ENCODE measurements at regions of chr6 and their contacts with region 1.

Region 1: DNA sequence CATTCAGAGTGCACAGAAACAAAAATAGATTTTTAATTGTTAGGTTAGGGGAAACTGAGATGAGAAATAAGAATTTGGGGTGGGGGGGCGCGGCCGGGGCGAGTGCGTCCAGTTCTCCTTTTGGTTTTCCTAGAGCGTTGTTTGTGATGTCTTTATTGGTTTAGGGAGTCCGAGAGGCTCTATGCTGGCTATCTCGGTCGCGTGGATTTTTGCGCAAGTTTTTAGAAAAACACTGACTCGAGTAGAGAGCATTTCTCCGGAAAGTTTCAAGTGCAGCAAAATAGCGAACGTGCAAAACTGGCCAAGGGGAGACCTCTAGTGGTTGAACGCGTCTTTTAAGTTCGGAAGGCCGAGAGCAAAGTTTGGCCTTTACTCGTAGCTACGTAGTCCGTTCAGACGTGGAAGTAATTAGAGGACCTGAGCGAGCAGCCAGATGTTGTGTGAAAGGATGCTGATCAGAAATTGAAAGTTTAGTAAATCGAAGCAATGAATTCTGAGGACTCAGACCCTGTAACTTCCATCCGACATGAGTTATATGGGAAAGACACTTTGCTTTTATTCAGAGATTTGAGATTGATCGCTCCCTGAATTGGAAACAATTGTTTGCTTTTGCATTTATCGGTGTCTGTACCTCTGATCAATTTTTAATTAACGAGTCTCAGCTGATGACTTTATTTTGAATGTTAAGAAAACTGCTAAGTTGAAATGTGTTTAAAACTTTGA is 2.7 kb downstream of the L3MBTL3 start:
- DNase-seq: peak; percentile 43 to 83 (median 78)
- ATAC-seq: peak; percentile 81
- H3K4me3 ChIP-seq: peak overlapping the region; percentile 62
- H3K4me3 Mint-ChIP-seq: peak overlapping the region; percentile 78 to 100 (median 98)
- H3K27ac ChIP-seq: peak overlapping the region; percentile 71
- H3K27ac Mint-ChIP-seq: peak overlapping the region; percentile 91 to 98 (median 96)
- H3K4me1 ChIP-seq: peaks cover 5 to 14% of the 10 kb centered on the region in 2 donors
- H3K4me1 Mint-ChIP-seq: peaks cover 21 to 56% (median 48%) of the 10 kb centered on the region in 7 donors
- H3K27me3 ChIP-seq: no peaks in the 10 kb centered on the region
- H3K27me3 Mint-ChIP-seq: peaks cover 0 to 19% (median 0%) of the 10 kb centered on the region in 5 donors

Region 2: DNA sequence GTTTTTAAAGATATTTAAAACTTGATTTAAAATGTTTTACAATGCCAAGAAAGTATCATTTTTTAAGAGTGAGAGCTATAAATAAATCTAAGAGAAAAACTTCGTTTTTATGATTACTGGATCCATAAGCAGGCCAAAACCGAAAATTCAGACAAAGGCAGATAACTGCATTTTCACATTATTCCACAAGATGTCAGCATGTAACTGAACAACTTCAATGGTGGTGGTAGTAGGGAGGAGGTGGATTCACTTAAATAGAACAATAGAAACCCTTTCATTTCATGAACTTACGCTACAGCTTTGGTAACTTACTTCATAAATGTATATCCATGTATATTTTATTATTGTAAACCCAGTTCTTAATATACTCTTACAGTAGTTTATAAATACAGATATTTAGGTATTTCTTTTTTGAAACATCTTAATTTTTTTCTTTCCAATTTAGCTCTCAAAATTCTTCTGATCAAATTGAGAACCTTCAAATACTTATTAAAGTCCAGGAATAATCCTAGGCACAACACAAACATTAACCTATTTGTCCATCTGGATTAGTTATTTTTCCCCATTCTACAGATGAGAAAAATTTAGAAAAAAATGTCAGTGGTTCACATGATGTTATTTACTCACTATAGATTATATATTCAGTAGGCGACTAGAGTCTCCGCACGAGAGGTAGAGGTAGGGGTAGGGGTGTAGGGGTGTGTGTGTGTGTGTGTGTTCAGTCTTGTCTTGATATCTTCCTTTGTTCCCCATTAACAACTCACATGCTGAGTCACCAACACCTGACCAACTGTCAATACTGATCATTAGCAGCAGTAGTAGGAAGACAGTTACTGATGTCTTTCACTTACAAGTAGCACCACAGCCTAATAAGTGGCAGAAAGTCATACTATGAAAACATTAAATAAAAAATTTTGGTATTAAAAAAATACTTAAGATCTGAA is 422.6 kb before region 1 on chr6:
- CTCF ChIA-PET with region 1: interaction called, 28 read pairs
- POLR2A ChIA-PET with region 1: interaction called, 5 read pairs
- intact Hi-C with region 1: loop called (anchors 1 kb)
- DNase-seq: peak in 7 of 9 donors; percentile 37 to 79 (median 70)
- ATAC-seq: peak; percentile 95
- H3K4me3 ChIP-seq: no peak overlapping the region
- H3K4me3 Mint-ChIP-seq: no peak overlapping the region
- H3K27ac ChIP-seq: no peak overlapping the region
- H3K27ac Mint-ChIP-seq: no peak overlapping the region
- H3K4me1 ChIP-seq: no peaks in the 10 kb centered on the region
- H3K4me1 Mint-ChIP-seq: peaks cover 0 to 2% (median 0%) of the 10 kb centered on the region in 7 donors
- H3K27me3 ChIP-seq: no peaks in the 10 kb centered on the region
- H3K27me3 Mint-ChIP-seq: peaks cover 0 to 3% (median 0%) of the 10 kb centered on the region in 5 donors

Region 3: DNA sequence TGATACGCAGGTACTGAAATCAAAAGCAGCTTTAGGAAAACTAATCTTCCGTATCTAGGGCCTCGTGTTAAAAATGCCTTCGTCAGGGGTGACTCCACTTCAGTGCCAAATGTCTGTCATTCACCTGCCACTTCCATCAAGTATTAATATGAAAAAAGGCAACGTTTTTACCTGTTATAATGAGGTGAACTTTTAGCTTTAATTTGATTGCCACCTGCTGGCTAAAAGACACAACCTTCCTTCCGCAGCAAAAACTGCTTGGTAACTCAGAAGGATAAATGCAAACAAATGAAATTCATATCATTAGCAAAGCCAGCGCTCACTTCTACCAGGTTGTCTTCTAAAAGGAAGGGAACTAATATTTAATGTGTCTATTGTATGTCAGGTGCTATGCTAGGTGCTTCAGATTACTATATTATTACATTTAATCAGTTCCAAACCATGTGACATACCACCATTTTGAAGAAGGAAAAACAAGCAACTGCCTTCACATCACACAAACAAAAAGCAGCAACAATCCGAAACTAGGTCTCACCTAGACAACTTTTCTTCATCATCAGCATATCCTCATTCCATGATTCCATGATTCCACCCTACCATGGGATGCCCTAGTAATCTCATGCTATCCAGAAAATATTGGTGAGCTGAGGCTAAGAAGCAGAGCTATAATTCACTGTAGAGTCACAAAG is 290.4 kb before region 1 on chr6:
- CTCF ChIA-PET with region 1: interaction called, 5 read pairs
- POLR2A ChIA-PET with region 1: no interaction called
- intact Hi-C with region 1: loop called (anchors 1 to 5 kb)
- DNase-seq: peak in 7 of 9 donors; percentile 22 to 62 (median 50)
- ATAC-seq: peak; percentile 66
- H3K4me3 ChIP-seq: no peak overlapping the region
- H3K4me3 Mint-ChIP-seq: no peak overlapping the region
- H3K27ac ChIP-seq: no peak overlapping the region
- H3K27ac Mint-ChIP-seq: peak overlapping the region in 4 of 9 donors; percentile 46 to 70 (median 50)
- H3K4me1 ChIP-seq: no peaks in the 10 kb centered on the region
- H3K4me1 Mint-ChIP-seq: peaks cover 0 to 13% (median 3%) of the 10 kb centered on the region in 7 donors
- H3K27me3 ChIP-seq: no peaks in the 10 kb centered on the region
- H3K27me3 Mint-ChIP-seq: no peaks in the 10 kb centered on the region

Region 4: DNA sequence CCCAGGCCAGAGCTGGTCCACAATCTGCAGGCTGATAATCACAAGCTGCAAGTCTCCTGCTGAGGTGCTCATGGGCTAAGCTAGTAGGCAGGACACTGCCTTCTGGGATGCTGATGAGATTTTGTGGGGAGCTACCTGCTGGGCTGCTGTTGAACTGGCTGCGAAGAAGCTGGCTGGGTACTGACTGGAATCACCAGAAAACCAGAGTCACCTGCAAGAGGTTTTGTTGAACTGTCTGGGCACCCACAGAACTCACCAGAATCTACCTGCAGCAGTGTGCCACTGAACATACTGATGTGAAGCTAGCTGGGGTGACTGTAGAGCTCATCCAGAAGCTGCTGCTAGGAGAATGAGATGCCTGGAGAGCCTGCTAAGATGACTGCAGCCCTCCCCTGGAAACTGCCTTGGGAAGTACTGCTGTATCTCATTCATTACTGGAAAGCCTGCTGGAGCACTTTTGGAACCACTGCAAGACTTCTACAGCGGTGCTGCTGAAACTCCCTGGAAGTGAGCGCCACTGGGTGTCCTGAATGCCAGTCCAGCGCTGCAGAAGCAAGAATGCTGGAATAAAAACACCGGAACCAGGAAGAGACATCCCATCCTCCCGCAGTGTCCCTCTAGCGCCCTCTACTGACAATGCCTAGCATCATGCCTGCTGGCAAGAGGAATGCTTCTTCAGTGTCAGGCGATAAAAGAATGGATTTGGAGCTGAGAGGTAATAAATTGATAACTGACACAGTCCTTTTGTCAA is 246.2 kb before region 1 on chr6:
- CTCF ChIA-PET with region 1: no interaction called
- POLR2A ChIA-PET with region 1: no interaction called
- intact Hi-C with region 1: loop called (anchors 1 to 2 kb)
- DNase-seq: peak in 7 of 9 donors; percentile 4 to 35 (median 24)
- ATAC-seq: peak; percentile 63
- H3K4me3 ChIP-seq: no peak overlapping the region
- H3K4me3 Mint-ChIP-seq: no peak overlapping the region
- H3K27ac ChIP-seq: no peak overlapping the region
- H3K27ac Mint-ChIP-seq: no peak overlapping the region
- H3K4me1 ChIP-seq: no peaks in the 10 kb centered on the region
- H3K4me1 Mint-ChIP-seq: peaks cover 0 to 5% (median 3%) of the 10 kb centered on the region in 7 donors
- H3K27me3 ChIP-seq: no peaks in the 10 kb centered on the region
- H3K27me3 Mint-ChIP-seq: peaks cover 0 to 39% (median 0%) of the 10 kb centered on the region in 5 donors

Region 5: DNA sequence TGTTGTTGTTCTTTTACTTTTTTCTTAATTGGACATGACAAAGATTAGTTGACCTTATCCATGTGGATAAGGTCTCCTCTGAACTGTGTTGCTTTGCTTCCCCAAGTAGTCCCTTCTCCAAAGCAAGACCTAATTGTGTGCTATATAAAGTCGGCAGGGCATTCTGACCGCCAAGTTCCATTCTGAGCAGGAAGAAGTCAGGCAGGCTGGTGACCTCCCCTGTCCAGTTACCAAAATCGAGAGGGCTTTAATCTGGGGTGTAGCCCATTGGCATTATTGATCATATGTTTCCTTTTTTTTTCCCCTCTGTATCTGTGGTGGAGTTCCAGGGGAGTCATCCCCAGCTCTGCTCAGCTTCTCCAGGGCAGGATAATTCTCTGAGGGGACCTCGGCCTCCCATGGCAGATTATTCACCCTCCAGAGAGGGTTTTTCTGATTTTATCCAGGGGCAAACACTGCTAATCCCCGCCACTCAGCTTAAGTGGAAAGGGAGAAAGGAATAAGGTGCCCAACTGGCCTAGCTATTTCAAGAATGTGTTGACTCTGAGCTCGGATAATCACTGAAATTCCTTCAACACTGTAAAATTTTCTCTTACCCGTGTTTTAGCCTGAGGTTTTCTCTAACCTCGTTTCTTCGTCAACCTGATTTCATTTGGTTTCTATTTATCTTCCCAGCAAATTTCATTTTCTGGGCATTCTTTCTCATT is 74.5 kb before region 1 on chr6:
- CTCF ChIA-PET with region 1: no interaction called
- POLR2A ChIA-PET with region 1: no interaction called
- intact Hi-C with region 1: no loop called
- DNase-seq: no peak
- ATAC-seq: no peak
- H3K4me3 ChIP-seq: no peak overlapping the region
- H3K4me3 Mint-ChIP-seq: no peak overlapping the region
- H3K27ac ChIP-seq: no peak overlapping the region
- H3K27ac Mint-ChIP-seq: no peak overlapping the region
- H3K4me1 ChIP-seq: no peaks in the 10 kb centered on the region
- H3K4me1 Mint-ChIP-seq: peaks cover 0 to 1% (median 0%) of the 10 kb centered on the region in 7 donors
- H3K27me3 ChIP-seq: no peaks in the 10 kb centered on the region
- H3K27me3 Mint-ChIP-seq: peaks cover 0 to 30% (median 8%) of the 10 kb centered on the region in 5 donors

Region 6: GRCh38 chr6:130223508-130223907 is 202.4 kb after region 1 on chr6:
- CTCF ChIA-PET with region 1: no interaction called
- POLR2A ChIA-PET with region 1: no interaction called
- intact Hi-C with region 1: loop called in 1 of 2 experiments (anchors 2 kb)
- DNase-seq: peak in 8 of 9 donors; percentile 38 to 65 (median 52)
- ATAC-seq: peak; percentile 89
- H3K4me3 ChIP-seq: peak overlapping the region; percentile 19
- H3K4me3 Mint-ChIP-seq: peak overlapping the region; percentile 4 to 93 (median 80)
- H3K27ac ChIP-seq: peak overlapping the region; percentile 57
- H3K27ac Mint-ChIP-seq: peak overlapping the region; percentile 89 to 97 (median 94)
- H3K4me1 ChIP-seq: peaks cover 16 to 20% of the 10 kb centered on the region in 2 donors
- H3K4me1 Mint-ChIP-seq: peaks cover 10 to 47% (median 39%) of the 10 kb centered on the region in 7 donors
- H3K27me3 ChIP-seq: no peaks in the 10 kb centered on the region
- H3K27me3 Mint-ChIP-seq: no peaks in the 10 kb centered on the region

Region 7: GRCh38 chr6:131627724-131628682 is 1606.9 kb after region 1 on chr6 and contains the start of gene MED23:
- CTCF ChIA-PET with region 1: no interaction called
- POLR2A ChIA-PET with region 1: no interaction called
- intact Hi-C with region 1: loop called in 1 of 2 experiments (anchors 5 kb)
- DNase-seq: peak; percentile 85 to 98 (median 94)
- ATAC-seq: peak; percentile 99
- H3K4me3 ChIP-seq: peak within 1 kb of the TSS; percentile 92
- H3K4me3 Mint-ChIP-seq: peak within 1 kb of the TSS; percentile 95 to 100 (median 98)
- H3K27ac ChIP-seq: peak within 1 kb of the TSS; percentile 75
- H3K27ac Mint-ChIP-seq: peak within 1 kb of the TSS; percentile 93 to 96 (median 95)
- H3K4me1 ChIP-seq: peaks cover 16 to 18% of the 10 kb centered on the region in 2 donors
- H3K4me1 Mint-ChIP-seq: peaks cover 20 to 51% (median 46%) of the 10 kb centered on the region in 7 donors
- H3K27me3 ChIP-seq: no peaks in the 10 kb centered on the region
- H3K27me3 Mint-ChIP-seq: peaks cover 0 to 2% (median 0%) of the 10 kb centered on the region in 5 donors
- total RNA-seq, gene MED23: 35.7 to 59.1 (median 55.4) TPM